Mammary epithelial cell (primary cell): ENCODE measurements at regions of chr17 and their contacts with region 1.

Region 1: GRCh38 chr17:60392042-60392844 is at the start of gene USP32:
- DNase-seq: peak; percentile 98
- H3K4me3 ChIP-seq: peak within 1 kb of the TSS; percentile 66 to 93 (median 75)
- H3K27ac ChIP-seq: peak within 1 kb of the TSS; percentile 91
- H3K4me1 ChIP-seq: peaks cover 22% of the 10 kb centered on the region
- H3K27me3 ChIP-seq: no peaks in the 10 kb centered on the region
- CTCF ChIP-seq: peak in 1 of 2 donors; percentile 61
- total RNA-seq, gene USP32: 56.8 to 63.0 TPM

Region 2: DNA sequence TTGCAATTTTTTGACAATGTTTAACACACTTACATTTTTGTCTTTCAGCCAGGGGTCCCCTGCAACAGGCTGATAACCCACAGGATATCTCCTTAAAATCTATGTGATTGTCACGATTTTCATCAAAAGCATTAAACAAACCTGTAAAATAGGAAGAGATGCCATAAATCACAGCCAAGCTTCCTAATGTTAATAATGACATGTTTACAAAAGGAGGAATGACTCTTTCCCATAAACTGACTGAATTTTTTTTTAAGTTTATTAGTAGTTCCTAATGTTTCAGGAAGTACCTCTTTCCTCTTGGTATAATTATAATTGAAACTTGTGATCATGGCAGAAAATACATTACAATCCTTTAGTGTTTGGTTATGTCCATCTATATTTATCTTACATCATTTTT is 122.8 kb before region 1 on chr17:
- CTCF ChIA-PET with region 1: interaction called, 14 read pairs
- dilution Hi-C with region 1: no loop called
- in situ Hi-C with region 1: no loop called
- intact Hi-C with region 1: no loop called
- DNase-seq: no peak
- H3K4me3 ChIP-seq: no peak overlapping the region
- H3K27ac ChIP-seq: no peak overlapping the region
- H3K4me1 ChIP-seq: peaks cover 10% of the 10 kb centered on the region
- H3K27me3 ChIP-seq: no peaks in the 10 kb centered on the region
- CTCF ChIP-seq: no peak

Region 3: DNA sequence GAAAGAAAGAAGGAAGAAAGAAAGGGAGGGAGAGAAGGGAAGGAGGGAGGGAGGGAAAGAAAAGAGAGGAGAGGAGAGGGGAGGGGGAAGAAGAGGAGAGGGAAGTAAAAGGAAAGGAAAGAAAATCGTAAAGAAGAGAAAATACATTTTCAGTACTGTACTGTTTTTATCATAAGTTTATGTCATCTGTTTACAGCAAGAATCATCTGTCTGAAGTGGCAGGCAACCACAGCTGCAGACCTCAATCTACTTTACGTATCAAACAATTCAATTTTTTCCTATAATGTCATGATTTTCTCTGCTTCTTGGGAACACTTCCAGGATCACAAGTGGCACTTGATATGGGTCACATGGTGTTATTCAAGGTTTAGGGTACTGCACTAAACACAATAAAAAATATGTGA is 58.6 kb before region 1 on chr17:
- CTCF ChIA-PET with region 1: no interaction called
- dilution Hi-C with region 1: no loop called
- in situ Hi-C with region 1: no loop called
- intact Hi-C with region 1: loop called (anchors 10 kb)
- DNase-seq: no peak
- H3K4me3 ChIP-seq: no peak overlapping the region
- H3K27ac ChIP-seq: no peak overlapping the region
- H3K4me1 ChIP-seq: no peaks in the 10 kb centered on the region
- H3K27me3 ChIP-seq: no peaks in the 10 kb centered on the region
- CTCF ChIP-seq: no peak

Region 4: GRCh38 chr17:60358606-60359225 is 33.5 kb before region 1 on chr17:
- CTCF ChIA-PET with region 1: no interaction called
- dilution Hi-C with region 1: no loop called
- in situ Hi-C with region 1: no loop called
- intact Hi-C with region 1: loop called (anchors 2 kb)
- DNase-seq: no peak
- H3K4me3 ChIP-seq: no peak overlapping the region
- H3K27ac ChIP-seq: no peak overlapping the region
- H3K4me1 ChIP-seq: peaks cover 27% of the 10 kb centered on the region
- H3K27me3 ChIP-seq: no peaks in the 10 kb centered on the region
- CTCF ChIP-seq: no peak

Region 5: DNA sequence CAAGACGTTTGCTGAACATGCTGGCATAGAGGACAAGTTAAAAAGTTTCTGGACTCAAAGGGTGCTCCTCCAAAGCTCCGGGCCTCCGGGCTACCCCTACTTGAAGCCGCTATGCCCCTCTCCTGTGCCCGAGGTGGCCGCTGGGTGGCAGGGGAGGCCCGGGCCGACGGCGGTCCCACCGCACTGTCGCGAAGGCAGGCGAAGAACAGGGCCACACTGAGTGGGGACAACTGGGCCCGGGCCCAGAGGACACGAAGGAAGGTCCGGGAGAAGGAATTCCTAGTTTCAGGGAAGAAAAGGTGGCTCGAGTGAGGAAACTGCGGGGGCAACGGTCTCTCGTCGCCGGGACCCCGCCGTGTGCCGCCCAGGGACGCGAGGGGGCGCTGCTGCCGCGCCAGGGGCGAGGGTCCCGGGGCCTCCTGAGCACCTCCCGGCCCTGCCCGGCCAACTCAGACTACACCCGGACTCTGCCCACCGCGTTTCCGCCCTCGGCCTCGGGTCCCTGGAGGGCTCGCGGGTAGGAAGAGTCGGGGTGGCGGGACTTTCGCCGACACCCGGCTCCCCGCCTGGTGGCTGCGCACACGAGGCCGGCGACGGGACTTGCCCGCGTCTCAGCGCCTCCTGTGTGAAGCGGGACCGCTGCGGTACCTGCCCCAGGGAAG is 29.2 kb after region 1 on chr17:
- CTCF ChIA-PET with region 1: no interaction called
- dilution Hi-C with region 1: no loop called
- in situ Hi-C with region 1: no loop called
- intact Hi-C with region 1: loop called (anchors 2 kb)
- DNase-seq: peak; percentile 26
- H3K4me3 ChIP-seq: peak overlapping the region; percentile 29 to 45 (median 35)
- H3K27ac ChIP-seq: no peak overlapping the region
- H3K4me1 ChIP-seq: peaks cover 9% of the 10 kb centered on the region
- H3K27me3 ChIP-seq: no peaks in the 10 kb centered on the region
- CTCF ChIP-seq: peak; percentile 35 to 74

Region 6: DNA sequence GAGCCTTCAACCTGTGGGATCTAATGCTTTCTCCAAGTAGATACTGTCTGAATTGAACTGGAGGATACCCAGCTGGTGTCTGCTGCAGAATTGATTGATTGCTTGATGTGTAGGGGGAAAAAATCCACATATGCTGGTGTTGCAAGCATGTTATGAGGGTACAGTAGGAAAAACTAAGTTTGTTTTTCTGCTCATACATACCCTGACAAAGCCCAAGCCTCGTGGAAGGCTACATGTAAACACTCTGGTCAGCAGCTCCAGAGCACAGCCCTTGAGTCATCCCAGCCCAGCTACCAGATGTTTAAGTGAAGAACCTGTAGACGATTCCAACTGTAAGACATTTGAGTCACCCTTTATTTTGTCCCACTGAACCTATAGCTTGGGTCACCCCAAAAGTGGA is 143.2 kb after region 1 on chr17:
- CTCF ChIA-PET with region 1: no interaction called
- dilution Hi-C with region 1: no loop called
- in situ Hi-C with region 1: no loop called
- intact Hi-C with region 1: no loop called
- DNase-seq: no peak
- H3K4me3 ChIP-seq: no peak overlapping the region
- H3K27ac ChIP-seq: no peak overlapping the region
- H3K4me1 ChIP-seq: no peaks in the 10 kb centered on the region
- H3K27me3 ChIP-seq: no peaks in the 10 kb centered on the region
- CTCF ChIP-seq: no peak